Activated CD8-positive, alpha-beta T cell treated with anti-CD3 and anti-CD28 coated beads for 36 hours (primary cell): ENCODE measurements at regions of chr1 and their contacts with region 1.

Region 1: GRCh38 chr1:15617175-15617880 is at the start of gene DDI2:
- DNase-seq: peak; percentile 95
- ATAC-seq: peak; percentile 92
- H3K4me3 Mint-ChIP-seq: peak within 1 kb of the TSS; percentile 83
- H3K27ac Mint-ChIP-seq: peak within 1 kb of the TSS; percentile 88
- H3K4me1 Mint-ChIP-seq: peaks cover 41% of the 10 kb centered on the region
- H3K27me3 Mint-ChIP-seq: no peaks in the 10 kb centered on the region
- CTCF ChIP-seq: no peak
- total RNA-seq, gene DDI2: 33.7 to 34.9 TPM

Region 2: DNA sequence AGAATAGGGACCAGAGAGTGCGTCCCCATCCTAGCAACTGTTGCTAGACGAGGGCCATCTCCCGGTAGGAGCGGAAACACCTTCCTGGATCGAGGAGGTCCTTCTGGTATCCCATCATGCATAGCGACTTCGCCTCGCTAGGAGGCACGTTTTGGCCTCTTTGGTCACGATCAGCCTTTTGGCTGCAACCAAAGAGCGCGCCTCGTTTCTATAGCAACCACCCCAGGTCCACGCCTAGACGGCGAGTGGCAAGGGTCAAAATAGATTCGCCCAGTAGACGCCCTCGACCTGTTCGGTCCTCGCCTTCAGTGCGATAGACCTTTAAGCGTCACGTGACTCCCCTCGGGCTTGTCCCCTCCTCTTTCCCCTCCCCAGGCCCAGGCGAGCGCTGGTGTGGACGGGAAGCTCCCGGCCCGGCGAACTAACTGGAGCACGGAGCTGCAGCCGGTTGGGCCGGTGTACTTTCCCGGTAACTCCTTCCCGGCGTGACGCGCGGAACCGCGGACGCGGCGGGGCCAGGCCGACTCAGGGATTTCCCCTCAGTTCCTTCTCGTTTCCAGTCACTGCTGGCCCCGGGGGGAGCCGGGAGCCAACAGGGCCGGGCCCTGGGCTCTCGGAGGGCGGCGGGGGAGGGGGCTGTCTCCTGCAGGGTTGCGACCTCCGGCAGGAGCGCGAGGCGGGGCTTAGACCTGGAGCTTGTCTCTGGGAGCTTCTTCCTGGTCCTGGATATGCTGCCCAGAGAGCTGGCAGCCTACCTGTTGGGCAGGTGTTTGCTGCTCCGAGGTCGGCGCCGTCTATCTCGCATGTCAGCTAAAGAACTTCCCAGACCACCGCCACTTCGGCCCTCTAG is 90.6 kb before region 1 on chr1 and contains the start of gene DNAJC16:
- CTCF ChIA-PET with region 1: no interaction called
- POLR2A ChIA-PET with region 1: interaction called, 7 read pairs
- intact Hi-C with region 1: loop called (anchors 5 kb)
- DNase-seq: peak; percentile 98
- ATAC-seq: peak; percentile 43
- H3K4me3 Mint-ChIP-seq: peak within 1 kb of the TSS; percentile 79
- H3K27ac Mint-ChIP-seq: peak within 1 kb of the TSS; percentile 98
- H3K4me1 Mint-ChIP-seq: peaks cover 46% of the 10 kb centered on the region
- H3K27me3 Mint-ChIP-seq: no peaks in the 10 kb centered on the region
- CTCF ChIP-seq: no peak
- total RNA-seq, gene DNAJC16: 10.0 to 13.0 TPM

Region 3: DNA sequence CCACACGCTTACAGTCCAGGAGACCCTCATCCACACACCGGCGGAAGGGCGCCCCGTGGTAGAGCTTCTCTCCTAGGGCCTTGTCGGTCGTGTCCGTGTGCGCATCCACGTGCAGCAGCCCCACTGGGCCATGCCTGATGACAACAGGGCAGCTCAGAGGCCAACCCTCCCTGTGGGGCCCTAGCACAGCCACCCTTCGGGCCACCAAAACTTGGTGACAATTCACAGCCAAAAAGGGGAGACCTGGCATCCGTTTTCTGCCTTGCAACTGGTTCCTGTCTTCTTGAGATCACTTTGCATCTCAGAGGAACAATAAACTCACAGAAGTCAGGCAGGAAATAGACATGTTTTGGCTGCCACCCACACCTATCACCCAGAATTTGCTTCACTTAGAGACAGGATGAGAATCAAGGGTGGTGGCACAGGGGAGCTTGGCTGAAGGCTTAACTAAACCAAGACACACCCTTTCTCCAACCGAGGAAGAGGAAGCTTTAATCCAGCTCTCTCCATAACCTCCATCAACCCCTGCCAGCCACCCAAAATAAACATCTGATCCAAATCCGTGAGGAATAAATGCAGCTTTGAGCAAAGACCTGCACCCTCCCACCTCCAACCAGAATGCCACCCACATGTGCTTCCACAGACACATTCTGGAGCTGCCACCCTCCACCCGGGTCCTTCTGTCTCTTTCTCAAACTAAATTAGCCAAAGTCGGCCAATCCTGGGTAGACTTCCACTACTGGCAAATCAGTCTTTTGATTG is 38.2 kb before region 1 on chr1:
- CTCF ChIA-PET with region 1: interaction called, 4 read pairs
- POLR2A ChIA-PET with region 1: interaction called, 14 read pairs
- intact Hi-C with region 1: no loop called
- DNase-seq: peak; percentile 67
- ATAC-seq: peak; percentile 84
- H3K4me3 Mint-ChIP-seq: peak overlapping the region; percentile 42
- H3K27ac Mint-ChIP-seq: peak overlapping the region; percentile 98
- H3K4me1 Mint-ChIP-seq: peaks cover 37% of the 10 kb centered on the region
- H3K27me3 Mint-ChIP-seq: no peaks in the 10 kb centered on the region
- CTCF ChIP-seq: no peak

Region 4: DNA sequence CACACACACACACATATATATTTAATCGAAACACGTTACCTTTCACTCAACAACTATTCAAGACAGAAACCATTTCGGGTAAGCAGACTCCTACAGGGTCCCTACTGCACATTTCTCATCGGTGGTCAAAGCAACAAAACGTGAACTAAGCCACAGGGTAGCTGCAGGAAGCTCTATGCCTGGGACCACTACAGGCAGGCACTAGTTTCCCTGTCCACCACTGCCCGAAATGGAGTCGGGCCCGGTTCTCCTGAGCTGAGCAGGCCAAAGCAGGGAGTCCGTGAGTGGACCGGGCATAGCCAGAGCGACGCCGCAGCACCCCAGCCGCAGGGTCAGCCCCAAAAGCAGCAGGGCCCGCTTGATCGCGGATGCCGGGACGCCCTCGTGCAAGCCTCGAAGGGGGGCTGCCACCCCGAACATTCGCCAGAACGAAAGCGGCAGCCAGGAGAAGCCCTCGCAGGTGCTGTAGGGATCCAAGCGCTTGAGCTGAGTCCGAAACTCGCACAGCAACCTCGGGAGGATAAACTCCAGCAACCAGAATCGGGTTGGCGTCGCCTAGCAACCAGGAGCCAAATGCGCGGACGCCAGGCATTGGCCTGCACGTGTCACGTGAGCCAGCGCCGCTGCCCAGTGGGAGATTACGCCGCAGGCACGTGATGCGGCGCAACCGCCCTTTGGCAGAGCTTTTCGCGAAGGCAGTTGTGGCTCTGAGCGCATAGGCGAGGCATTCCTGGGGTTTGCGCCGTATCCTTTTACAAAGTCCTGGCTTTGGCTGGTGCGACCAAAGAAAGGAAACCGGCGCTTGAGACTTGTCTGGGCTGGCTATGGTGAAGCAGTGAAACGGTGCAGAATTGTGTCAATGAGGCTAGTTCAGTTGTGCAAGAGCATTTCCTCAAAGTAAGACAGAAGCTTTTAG is 14.0 kb before region 1 on chr1:
- CTCF ChIA-PET with region 1: interaction called, 5 read pairs
- POLR2A ChIA-PET with region 1: interaction called, 18 read pairs
- intact Hi-C with region 1: no loop called
- DNase-seq: peak; percentile 95
- ATAC-seq: peak; percentile 95
- H3K4me3 Mint-ChIP-seq: peak overlapping the region; percentile 50
- H3K27ac Mint-ChIP-seq: peak overlapping the region; percentile 4
- H3K4me1 Mint-ChIP-seq: peaks cover 6% of the 10 kb centered on the region
- H3K27me3 Mint-ChIP-seq: no peaks in the 10 kb centered on the region
- CTCF ChIP-seq: no peak